SK-N-SH (cell line): ENCODE measurements at regions of chr22 and their contacts with region 1.

Region 1: GRCh38 chr22:30754971-30755756 is 60.5 kb downstream of the OSBP2 start:
- DNase-seq: peak; percentile 74
- H3K4me3 ChIP-seq: no peak overlapping the region
- H3K27ac ChIP-seq: no peak overlapping the region
- H3K4me1 ChIP-seq: no peaks in the 10 kb centered on the region; a peak in 2 of 4 replicates
- H3K27me3 ChIP-seq: no peaks in the 10 kb centered on the region
- CTCF ChIP-seq: peak; percentile 83
- EP300 ChIP-seq: no peak
- RAD21 ChIP-seq: peak; percentile 96

Region 2: DNA sequence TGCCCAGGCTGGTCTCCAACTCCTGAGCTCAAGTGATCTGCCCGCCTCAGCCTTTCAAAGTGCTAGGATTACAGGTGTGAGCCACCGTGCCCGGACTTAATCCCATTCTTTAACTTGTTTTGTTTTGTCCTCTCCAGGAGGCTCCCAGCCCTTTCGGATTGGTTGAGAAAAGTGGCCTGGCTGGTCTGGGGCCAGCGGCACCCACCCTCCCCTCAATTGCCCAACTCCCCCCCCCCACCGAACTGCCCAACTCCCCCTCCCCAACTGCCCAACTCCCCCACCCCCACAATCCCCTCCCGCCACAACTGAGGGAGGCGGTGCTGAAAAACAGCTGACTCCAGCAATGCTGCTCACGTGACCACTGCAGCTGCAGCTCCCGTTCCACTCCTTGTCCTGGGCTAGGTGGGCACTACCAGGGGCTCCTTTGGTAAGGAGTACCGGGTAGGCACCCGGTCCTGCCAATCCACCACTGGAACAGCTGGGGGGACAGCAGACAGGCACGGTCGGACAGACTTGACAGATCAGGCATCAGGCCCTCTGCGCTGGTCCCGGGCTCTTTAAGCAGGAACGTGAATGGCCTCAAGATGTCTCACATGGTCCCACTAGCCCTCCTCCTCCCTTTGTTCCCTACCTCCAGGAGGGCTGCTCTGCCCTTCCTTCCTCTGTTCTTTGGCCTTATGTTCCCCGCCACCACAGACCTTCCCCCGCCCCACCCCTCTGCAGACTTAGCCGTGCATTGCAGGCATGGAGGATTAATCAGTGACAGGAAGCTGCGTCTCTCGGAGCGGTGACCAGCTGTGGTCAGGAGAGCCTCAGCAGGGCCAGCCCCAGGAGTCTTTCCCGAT is 148.5 kb before region 1 on chr22 and contains the start of gene TCN2:
- CTCF ChIA-PET with region 1: interaction called, 15 read pairs
- POLR2A ChIA-PET with region 1: no interaction called
- DNase-seq: peak; percentile 80
- H3K4me3 ChIP-seq: peak within 1 kb of the TSS; percentile 53 to 56
- H3K27ac ChIP-seq: peak within 1 kb of the TSS in 1 of 2 experiments; percentile 64; a peak in 2 of 4 replicates
- H3K4me1 ChIP-seq: peaks cover 10 to 15% of the 10 kb centered on the region in 2 experiments; a peak in 2 of 4 replicates
- H3K27me3 ChIP-seq: no peaks in the 10 kb centered on the region
- CTCF ChIP-seq: no peak
- EP300 ChIP-seq: no peak
- RAD21 ChIP-seq: no peak
- polyA plus RNA-seq, gene TCN2: 4.1 and 4.5 TPM in 2 replicates

Region 3: GRCh38 chr22:30667494-30668385 is 87.4 kb before region 1 on chr22 and contains the start of gene DUSP18:
- CTCF ChIA-PET with region 1: interaction called, 13 read pairs
- POLR2A ChIA-PET with region 1: no interaction called
- DNase-seq: peak; percentile 99
- H3K4me3 ChIP-seq: peak within 1 kb of the TSS; percentile 65 to 71
- H3K27ac ChIP-seq: peak within 1 kb of the TSS; percentile 52 to 73; a peak in 3 of 4 replicates
- H3K4me1 ChIP-seq: peaks cover 0 to 12% of the 10 kb centered on the region in 2 experiments; a peak in 2 of 4 replicates
- H3K27me3 ChIP-seq: no peaks in the 10 kb centered on the region
- CTCF ChIP-seq: peak; percentile 42
- EP300 ChIP-seq: no peak
- RAD21 ChIP-seq: no peak
- polyA plus RNA-seq, gene DUSP18: 11.7 and 13.9 TPM in 2 replicates

Region 4: DNA sequence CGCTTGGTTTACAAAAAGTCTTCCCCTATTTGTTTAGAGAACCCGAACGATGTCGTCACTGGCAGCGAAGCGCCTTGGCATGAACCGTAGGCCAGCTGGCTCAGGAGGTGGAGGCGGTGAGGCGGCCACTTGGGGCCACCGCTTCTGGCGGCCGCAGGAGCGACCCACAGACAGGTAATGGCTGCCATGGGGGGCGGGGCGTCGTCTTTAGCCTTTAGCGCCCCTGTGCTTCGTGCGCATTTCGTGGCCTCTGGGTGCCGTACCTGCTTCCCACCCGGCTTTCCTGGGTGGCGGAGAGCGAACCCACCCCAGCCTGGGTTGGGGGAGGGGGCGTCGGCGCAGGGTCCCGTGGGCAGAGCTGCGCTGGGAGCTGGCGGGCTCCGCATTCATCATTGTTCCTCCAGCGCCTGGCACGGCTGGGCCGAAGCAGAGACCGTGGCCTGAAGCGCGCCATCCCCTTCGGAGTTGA is 61.0 kb before region 1 on chr22:
- CTCF ChIA-PET with region 1: interaction called, 17 read pairs
- POLR2A ChIA-PET with region 1: no interaction called
- DNase-seq: peak; percentile 84
- H3K4me3 ChIP-seq: peak overlapping the region; percentile 64 to 76
- H3K27ac ChIP-seq: peak overlapping the region in 1 of 2 experiments; percentile 84; a peak in 2 of 4 replicates
- H3K4me1 ChIP-seq: peaks cover 0 to 19% of the 10 kb centered on the region in 2 experiments; a peak in 2 of 4 replicates
- H3K27me3 ChIP-seq: no peaks in the 10 kb centered on the region
- CTCF ChIP-seq: no peak
- EP300 ChIP-seq: no peak
- RAD21 ChIP-seq: no peak

Region 5: DNA sequence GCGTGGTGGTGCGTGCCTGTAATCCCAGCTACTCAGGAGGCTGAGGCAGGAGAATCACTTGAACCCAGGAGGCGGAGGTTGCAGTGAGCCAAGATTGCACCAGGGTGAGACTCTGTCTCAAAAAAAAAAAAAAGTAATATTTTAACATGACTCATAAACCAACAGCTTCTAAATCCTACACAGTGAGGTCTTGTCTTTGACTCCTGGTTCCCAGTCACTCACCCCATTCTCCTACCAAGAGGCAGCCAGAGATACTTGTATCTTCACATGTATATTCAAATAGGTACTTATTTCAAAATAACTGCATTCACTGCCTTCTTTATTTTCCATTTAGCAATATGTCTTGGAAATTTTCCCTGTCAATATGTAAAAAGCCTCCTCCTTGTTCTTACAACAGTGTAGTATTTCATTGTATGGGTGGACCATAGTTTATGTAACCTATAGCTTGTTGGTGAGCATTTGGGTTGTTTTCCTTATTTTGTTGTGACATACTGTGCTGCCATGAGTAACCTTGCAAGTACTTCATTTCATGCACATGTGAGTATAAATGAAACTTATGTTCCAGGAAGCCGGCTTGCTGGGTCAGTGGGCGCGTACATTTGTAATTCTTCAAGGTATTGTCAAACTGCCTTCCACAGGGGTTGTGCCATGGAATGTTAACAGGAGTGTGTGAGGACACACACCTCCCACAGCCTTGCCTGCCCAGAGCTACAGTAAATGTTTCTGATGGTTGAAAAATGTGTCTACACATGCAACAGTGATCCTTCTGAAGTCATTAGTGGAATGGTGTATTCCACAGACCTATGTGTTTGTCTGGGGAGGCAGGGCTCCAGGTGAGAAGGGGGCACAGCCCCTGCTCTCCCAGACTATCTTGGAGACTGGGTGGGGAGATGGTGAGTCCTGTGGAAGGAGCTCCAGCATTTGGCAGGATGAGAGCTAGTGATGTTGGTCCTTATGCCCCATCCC is 12.6 kb before region 1 on chr22:
- CTCF ChIA-PET with region 1: interaction called, 12 read pairs
- POLR2A ChIA-PET with region 1: no interaction called
- DNase-seq: no peak
- H3K4me3 ChIP-seq: no peak overlapping the region
- H3K27ac ChIP-seq: no peak overlapping the region
- H3K4me1 ChIP-seq: no peaks in the 10 kb centered on the region
- H3K27me3 ChIP-seq: no peaks in the 10 kb centered on the region
- CTCF ChIP-seq: no peak
- EP300 ChIP-seq: no peak
- RAD21 ChIP-seq: no peak